HAP-1 (cell line): ENCODE measurements at regions of chr13 and their contacts with region 1.

Region 1: DNA sequence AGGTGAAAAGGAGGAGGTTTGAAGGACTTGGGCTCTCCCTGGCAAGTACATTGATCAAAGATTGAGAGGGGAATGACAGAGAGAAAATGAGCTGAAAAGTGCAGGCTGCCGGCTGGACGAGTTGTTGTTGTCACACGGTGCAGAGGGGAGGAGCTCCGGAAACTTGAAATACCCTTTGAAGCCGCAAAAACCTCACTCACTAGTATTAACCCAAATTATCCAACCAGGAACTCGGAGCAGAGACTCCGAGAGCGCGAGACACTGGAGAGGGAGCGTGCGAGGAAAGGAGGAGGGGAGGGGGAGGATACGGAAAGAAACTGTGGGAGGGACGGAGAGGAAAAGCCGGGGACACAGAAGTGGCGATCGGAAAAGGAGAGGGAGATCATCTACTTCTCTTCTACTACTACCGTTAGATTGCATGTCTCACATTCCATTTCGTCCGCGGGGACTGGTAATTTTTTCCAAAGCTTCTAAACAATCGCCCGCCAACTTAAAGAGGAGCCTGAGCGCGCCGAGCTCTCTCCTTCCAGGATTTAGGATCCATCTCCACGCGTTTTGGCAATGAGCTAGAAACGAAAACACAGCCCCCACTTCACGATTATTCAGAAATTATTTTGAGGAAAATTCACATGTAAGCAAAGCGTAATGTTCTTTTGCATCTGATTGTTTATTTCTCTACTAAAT is at the start of gene DACH1:
- DNase-seq: peak; percentile 92 to 98
- H3K4me3 ChIP-seq: peak within 1 kb of the TSS; percentile 74
- H3K4me1 ChIP-seq: peaks cover 45% of the 10 kb centered on the region
- H3K27me3 ChIP-seq: no peaks in the 10 kb centered on the region

Region 2: DNA sequence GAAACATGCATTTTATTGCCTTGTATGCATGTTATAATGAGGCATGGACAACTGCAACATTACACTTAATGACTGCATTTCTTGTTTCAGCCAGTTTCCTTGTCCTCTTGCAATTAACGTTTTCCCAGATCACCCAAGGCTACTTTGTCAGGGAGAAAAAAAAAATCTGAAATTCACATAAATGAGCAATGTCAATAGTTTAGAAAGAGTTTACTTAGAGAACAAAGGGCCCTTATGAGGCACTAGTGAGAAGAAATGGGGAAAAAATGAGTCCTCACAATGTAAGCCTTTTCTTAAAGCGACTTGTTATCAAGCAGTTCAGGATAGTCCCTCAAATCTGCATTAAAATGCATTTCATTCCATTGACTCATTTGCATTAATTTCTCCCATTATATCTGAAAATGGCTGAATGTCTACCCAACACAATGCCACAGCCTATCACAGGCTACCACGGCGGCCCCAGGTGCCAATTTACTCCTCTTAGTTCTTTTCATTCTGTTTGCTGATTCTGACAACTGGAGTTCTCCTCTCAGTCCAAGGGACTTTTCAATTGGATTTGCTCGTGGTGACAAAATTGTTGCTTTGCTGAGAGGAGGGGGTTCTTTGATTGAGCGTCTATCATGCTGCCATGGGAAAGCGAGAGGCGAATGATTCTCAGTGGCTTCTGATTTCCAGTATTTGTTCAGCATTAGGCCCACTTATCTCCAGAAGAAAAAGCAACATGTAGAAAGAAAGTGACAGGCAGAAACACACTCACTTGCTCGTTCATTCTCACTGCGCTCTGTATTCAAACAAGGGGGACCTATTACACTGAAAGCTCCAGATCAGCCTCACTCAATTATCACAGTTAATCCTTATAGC is 107.4 kb before region 1 on chr13:
- in situ Hi-C with region 1: loop called (anchors 25 kb)
- DNase-seq: peak; percentile 89 to 100
- H3K4me3 ChIP-seq: peak overlapping the region; percentile 10
- H3K4me1 ChIP-seq: peaks cover 38% of the 10 kb centered on the region
- H3K27me3 ChIP-seq: no peaks in the 10 kb centered on the region